ENCODE measurements at regions of chr1 and their contacts with region 1.

Region 1: DNA sequence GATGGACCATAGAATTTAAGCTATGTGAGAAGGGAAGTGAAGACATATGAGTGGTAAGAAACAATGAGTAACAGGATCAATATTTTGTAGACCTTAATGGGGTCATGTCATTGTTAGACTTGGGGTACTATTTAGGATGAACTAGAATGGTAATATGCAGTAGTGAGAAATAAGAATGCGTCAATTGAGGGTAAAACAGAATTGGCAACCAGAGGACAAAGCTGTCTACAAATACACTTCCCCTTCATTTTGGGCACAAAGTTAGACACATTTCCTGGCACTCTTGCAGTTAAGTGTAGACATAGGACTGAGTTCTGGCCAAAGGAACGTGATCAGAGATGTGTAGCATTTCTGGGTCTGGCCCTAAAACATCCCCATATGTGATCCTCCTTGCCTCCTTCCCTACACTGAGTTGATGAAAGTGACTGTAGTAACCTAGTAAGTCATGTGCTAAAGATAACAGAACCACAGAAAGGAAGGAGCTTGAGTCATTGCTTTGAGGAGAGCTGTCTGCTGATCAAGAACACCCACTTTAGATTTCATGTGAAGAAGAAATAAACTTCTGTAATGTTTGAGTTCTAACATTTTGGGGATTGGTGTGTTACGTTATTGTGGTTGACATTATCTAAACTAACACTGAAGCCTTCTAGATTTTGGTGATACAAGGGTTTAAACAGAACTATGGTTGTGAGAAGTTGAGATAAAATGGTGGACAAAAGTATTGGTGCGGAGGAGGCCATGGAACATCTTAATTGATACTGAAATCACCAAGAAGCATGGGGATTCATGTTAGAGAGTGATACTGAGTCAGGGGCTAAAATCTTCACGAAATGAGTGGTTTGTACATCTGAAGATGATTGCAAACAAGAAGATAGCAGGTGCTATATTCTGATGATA is 41.7 kb downstream of the CD55 start:
- DNase-seq: no peak
- H3K4me3 Mint-ChIP-seq: no peak overlapping the region
- H3K27ac Mint-ChIP-seq: no peak overlapping the region
- H3K4me1 Mint-ChIP-seq: peaks cover 2% of the 10 kb centered on the region
- H3K27me3 Mint-ChIP-seq: no peaks in the 10 kb centered on the region

Region 2: GRCh38 chr1:207321079-207321789 is 42.0 kb before region 1 on chr1 and contains the start of gene CD55:
- intact Hi-C with region 1: loop called (anchors 1 kb)
- DNase-seq: peak; percentile 99
- H3K4me3 Mint-ChIP-seq: peak within 1 kb of the TSS; percentile 93
- H3K27ac Mint-ChIP-seq: peak within 1 kb of the TSS; percentile 99
- H3K4me1 Mint-ChIP-seq: peaks cover 33% of the 10 kb centered on the region
- H3K27me3 Mint-ChIP-seq: no peaks in the 10 kb centered on the region
- total RNA-seq, gene CD55: 132 and 135 TPM in 2 replicates

Region 3: DNA sequence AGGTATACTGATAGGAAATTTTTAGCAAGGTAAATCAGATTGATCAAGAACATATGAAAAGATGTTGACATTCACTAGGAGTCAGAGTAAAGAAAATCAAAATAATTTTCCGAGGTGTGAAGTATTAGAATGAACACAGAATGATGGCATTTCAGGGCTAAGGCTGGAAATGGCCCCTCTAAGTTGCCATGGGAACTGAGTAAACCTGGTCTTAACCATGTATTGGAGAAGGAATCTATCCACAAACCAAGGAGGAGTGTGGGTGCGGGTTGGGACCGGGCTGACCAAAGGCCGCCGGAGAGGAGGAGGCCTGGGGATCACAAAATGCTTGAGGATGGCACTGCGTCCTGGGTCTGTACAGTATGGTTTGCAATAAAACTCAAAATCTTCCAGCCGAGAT is 11.7 kb after region 1 on chr1:
- intact Hi-C with region 1: no loop called
- DNase-seq: no peak
- H3K4me3 Mint-ChIP-seq: no peak overlapping the region
- H3K27ac Mint-ChIP-seq: no peak overlapping the region
- H3K4me1 Mint-ChIP-seq: no peaks in the 10 kb centered on the region
- H3K27me3 Mint-ChIP-seq: peaks cover 2% of the 10 kb centered on the region

Region 4: GRCh38 chr1:207389740-207390464 is 26.7 kb after region 1 on chr1:
- intact Hi-C with region 1: loop called (anchors 1 kb)
- DNase-seq: no peak
- H3K4me3 Mint-ChIP-seq: no peak overlapping the region
- H3K27ac Mint-ChIP-seq: peak overlapping the region; percentile 82
- H3K4me1 Mint-ChIP-seq: peaks cover 8% of the 10 kb centered on the region
- H3K27me3 Mint-ChIP-seq: no peaks in the 10 kb centered on the region

Region 5: GRCh38 chr1:207412845-207413244 is 49.6 kb after region 1 on chr1:
- intact Hi-C with region 1: loop called (anchors 1 kb)
- DNase-seq: no peak
- H3K4me3 Mint-ChIP-seq: no peak overlapping the region
- H3K27ac Mint-ChIP-seq: no peak overlapping the region
- H3K4me1 Mint-ChIP-seq: peaks cover 40% of the 10 kb centered on the region
- H3K27me3 Mint-ChIP-seq: peaks cover 2% of the 10 kb centered on the region

Region 6: GRCh38 chr1:207444514-207445217 is 81.5 kb after region 1 on chr1:
- intact Hi-C with region 1: no loop called
- DNase-seq: no peak
- H3K4me3 Mint-ChIP-seq: no peak overlapping the region
- H3K27ac Mint-ChIP-seq: no peak overlapping the region
- H3K4me1 Mint-ChIP-seq: no peaks in the 10 kb centered on the region
- H3K27me3 Mint-ChIP-seq: peaks cover 29% of the 10 kb centered on the region

Region 7: GRCh38 chr1:207474210-207474609 is 111.0 kb after region 1 on chr1:
- intact Hi-C with region 1: no loop called
- DNase-seq: no peak
- H3K4me3 Mint-ChIP-seq: no peak overlapping the region
- H3K27ac Mint-ChIP-seq: no peak overlapping the region
- H3K4me1 Mint-ChIP-seq: peaks cover 2% of the 10 kb centered on the region
- H3K27me3 Mint-ChIP-seq: peaks cover 7% of the 10 kb centered on the region